AG04449 (cell line): ENCODE measurements at regions of chr3 and their contacts with region 1.

Region 1: GRCh38 chr3:15268033-15268631 is 62.1 kb downstream of the CAPN7 start:
- DNase-seq: peak; percentile 31
- H3K4me3 ChIP-seq: no peak overlapping the region
- CTCF ChIP-seq: peak; percentile 94

Region 2: GRCh38 chr3:14915636-14916222 is 352.4 kb before region 1 on chr3:
- CTCF ChIA-PET with region 1: no interaction called
- POLR2A ChIA-PET with region 1: no interaction called
- DNase-seq: no peak
- H3K4me3 ChIP-seq: no peak overlapping the region
- CTCF ChIP-seq: no peak

Region 3: DNA sequence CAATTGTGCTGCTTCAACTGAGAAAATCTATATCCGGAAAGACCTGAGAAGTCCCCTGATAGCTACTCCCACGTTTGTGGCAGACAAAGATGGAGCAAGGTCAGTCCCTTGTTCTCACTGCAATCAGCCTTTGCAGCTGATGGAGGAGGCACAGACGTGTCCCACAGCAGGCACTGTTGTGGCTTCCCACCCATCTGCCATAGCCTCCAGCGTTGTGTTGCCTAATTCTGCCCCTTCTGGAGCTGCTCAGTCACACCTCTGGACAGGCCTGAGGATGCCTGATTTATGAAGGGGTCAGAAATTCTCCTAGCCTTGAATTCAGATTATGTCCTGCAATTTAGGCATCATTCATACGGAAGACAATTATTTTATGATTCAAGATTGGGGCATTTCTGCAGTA is 244.9 kb before region 1 on chr3:
- CTCF ChIA-PET with region 1: no interaction called
- POLR2A ChIA-PET with region 1: no interaction called
- DNase-seq: no peak
- H3K4me3 ChIP-seq: no peak overlapping the region
- CTCF ChIP-seq: no peak

Region 4: GRCh38 chr3:15205934-15206661 is 62.0 kb before region 1 on chr3 and contains the start of gene CAPN7:
- CTCF ChIA-PET with region 1: interaction called, 18 read pairs
- POLR2A ChIA-PET with region 1: no interaction called
- DNase-seq: peak; percentile 46
- H3K4me3 ChIP-seq: peak within 1 kb of the TSS; percentile 86
- CTCF ChIP-seq: peak; percentile 55

Region 5: DNA sequence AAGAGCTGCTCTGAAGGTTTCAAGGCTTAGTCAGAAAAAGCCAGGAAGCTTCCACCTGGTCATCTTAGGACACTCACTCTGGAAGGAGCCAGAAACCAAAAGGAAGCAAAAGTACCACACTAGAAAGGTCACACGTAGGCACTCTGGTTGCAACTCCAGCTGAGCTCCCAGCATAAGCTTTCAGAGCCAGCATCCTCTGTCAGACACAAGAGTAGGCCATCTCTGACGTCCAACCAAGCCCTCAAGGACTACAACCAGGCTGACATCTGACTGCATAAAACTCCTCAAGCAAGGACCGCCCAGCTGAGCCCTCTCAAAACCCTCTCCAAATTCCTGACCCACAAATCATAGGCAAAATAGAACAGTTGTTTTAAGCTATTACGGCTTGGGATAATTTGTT is 51.4 kb after region 1 on chr3:
- CTCF ChIA-PET with region 1: interaction called, 16 read pairs
- POLR2A ChIA-PET with region 1: interaction called, 3 read pairs
- DNase-seq: no peak
- H3K4me3 ChIP-seq: no peak overlapping the region
- CTCF ChIP-seq: no peak

Region 6: GRCh38 chr3:15356186-15356585 is 88.1 kb after region 1 on chr3:
- CTCF ChIA-PET with region 1: interaction called, 19 read pairs
- POLR2A ChIA-PET with region 1: no interaction called
- DNase-seq: no peak
- H3K4me3 ChIP-seq: no peak overlapping the region
- CTCF ChIP-seq: no peak

Region 7: DNA sequence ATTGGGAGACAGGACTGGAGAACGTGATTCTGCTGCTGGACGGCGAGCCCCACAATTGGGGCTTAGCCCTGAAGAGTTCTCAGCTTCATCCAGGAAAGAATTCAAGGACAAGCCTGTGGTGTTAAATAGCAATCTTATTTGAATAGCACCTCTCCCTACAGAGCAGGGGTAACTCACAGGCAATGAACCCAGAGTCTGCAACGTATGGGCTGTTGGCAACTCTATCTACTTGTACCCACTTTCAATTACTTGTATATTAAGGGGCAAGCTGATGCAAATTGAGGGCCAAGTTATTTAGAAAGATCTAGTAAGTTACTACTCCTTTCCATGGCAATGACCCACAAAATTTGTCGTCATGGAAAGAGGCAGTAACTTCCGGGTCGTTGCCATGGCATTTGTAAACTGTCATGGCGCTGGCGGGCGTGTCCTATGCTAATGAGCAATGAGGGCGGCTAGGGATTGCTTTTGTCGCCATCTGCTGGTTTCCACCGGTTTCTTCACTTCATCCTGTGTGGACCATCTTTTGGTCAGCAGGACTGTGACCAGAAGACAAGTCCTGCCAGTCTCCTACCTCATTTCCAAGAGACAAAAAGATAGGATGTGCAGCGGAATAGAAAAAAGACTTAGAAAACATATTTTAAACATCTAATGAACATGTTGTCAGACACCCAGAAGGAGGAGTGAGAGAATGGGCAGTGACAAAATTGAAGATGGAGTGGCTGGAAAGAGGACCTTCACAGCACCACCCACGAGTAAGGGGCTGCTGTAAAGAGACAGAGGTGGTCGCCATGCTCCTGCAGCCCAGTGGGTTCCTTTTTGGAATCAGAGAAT is 110.0 kb after region 1 on chr3:
- CTCF ChIA-PET with region 1: interaction called, 366 read pairs
- POLR2A ChIA-PET with region 1: no interaction called
- DNase-seq: peak; percentile 61
- H3K4me3 ChIP-seq: no peak overlapping the region
- CTCF ChIP-seq: peak; percentile 69

Region 8: GRCh38 chr3:15405448-15406050 is 137.4 kb after region 1 on chr3:
- CTCF ChIA-PET with region 1: interaction called, 409 read pairs
- POLR2A ChIA-PET with region 1: no interaction called
- DNase-seq: no peak
- H3K4me3 ChIP-seq: no peak overlapping the region
- CTCF ChIP-seq: peak; percentile 48